Activated T-helper 1 cell treated with anti-CD3 and anti-CD28 coated beads, Interleukin-12 subunit alpha, Interleukin-12 subunit beta, Interleukin-2, Interleukin-4 antibody, amounts not matched to agents 30 ng/mL and 10 ng/mL and 1 ng/mL, durations not matched to agents 14 hours and 24 hours and 36 hours (primary cell): ENCODE measurements at regions of chr13 and their contacts with region 1.

Region 1: DNA sequence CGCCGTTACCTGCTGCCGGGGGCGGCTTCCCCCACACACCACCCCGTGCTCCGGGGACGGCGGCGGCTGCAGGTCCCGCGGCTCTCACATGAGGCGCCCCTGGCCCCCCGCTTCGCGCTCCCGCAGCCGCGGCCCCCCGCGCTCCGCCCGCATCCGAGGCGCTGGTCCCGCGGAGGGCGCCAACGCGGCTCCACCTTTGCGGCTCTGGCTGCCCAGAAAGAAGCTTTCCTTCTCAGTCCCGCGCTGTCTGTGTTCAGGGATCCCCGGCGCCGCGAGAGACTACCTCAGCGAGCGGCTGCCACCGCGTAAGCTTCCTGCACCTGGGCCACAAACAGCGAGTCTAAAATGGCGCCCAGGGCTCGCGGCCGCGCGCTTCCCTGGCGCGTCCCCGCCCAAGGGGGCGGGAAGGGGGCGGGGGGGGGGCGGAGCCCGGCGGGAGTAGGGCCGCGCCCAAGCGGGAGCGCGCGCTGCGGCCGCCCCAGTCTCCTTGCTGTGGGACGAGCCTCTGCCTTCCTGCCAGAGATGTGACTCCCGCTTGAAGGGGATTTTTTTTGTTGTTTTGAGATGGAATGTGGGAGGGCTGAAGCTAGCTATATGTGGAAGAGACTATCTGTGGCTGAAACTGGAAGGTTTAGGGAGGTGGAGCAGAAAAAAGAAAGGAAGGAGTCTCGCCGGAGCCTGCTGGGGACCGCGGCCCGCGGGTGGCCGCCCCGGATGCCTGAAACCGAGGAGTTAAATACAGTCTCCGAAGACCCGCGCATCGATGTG is at the start of gene FBXL3:
- DNase-seq: peak; percentile 78
- H3K4me3 Mint-ChIP-seq: peak within 1 kb of the TSS; percentile 94
- H3K27ac Mint-ChIP-seq: peak within 1 kb of the TSS; percentile 93
- H3K4me1 Mint-ChIP-seq: peaks cover 58% of the 10 kb centered on the region
- H3K27me3 Mint-ChIP-seq: no peaks in the 10 kb centered on the region
- total RNA-seq, gene FBXL3: 40.1 and 40.8 TPM in 2 replicates

Region 2: GRCh38 chr13:76861859-76862258 is 165.1 kb before region 1 on chr13:
- intact Hi-C with region 1: no loop called
- DNase-seq: no peak
- H3K4me3 Mint-ChIP-seq: no peak overlapping the region
- H3K27ac Mint-ChIP-seq: no peak overlapping the region
- H3K4me1 Mint-ChIP-seq: no peaks in the 10 kb centered on the region
- H3K27me3 Mint-ChIP-seq: peaks cover 18% of the 10 kb centered on the region

Region 3: GRCh38 chr13:76886292-76887075 is 140.5 kb before region 1 on chr13 and contains the start of gene KCTD12:
- intact Hi-C with region 1: loop called (anchors 1 kb)
- DNase-seq: peak; percentile 60
- H3K4me3 Mint-ChIP-seq: peak within 1 kb of the TSS; percentile 90
- H3K27ac Mint-ChIP-seq: peak within 1 kb of the TSS; percentile 85
- H3K4me1 Mint-ChIP-seq: peaks cover 28% of the 10 kb centered on the region
- H3K27me3 Mint-ChIP-seq: peaks cover 28% of the 10 kb centered on the region
- total RNA-seq, gene KCTD12: 10.4 and 10.7 TPM in 2 replicates

Region 4: DNA sequence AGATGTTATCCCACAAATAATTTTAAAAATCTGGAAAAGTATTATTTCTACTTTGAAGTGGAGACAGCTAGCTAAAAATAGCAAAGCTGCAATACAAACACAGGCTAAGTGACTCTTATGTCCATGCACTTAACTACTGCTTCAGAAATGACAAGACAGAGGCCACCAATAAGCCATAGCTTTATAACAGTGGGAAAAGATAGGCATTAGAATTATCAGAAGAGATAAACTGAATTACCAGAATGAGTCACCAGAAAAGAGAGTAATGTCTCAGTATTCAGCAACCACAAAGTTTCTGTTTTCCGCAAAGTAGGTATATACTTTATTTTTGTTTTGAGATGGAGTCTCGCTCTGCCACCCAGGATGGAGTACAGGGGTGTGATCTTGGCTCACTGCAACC is 18.0 kb before region 1 on chr13:
- intact Hi-C with region 1: loop called (anchors 1 kb)
- DNase-seq: no peak
- H3K4me3 Mint-ChIP-seq: no peak overlapping the region
- H3K27ac Mint-ChIP-seq: no peak overlapping the region
- H3K4me1 Mint-ChIP-seq: peaks cover 26% of the 10 kb centered on the region
- H3K27me3 Mint-ChIP-seq: no peaks in the 10 kb centered on the region

Region 5: DNA sequence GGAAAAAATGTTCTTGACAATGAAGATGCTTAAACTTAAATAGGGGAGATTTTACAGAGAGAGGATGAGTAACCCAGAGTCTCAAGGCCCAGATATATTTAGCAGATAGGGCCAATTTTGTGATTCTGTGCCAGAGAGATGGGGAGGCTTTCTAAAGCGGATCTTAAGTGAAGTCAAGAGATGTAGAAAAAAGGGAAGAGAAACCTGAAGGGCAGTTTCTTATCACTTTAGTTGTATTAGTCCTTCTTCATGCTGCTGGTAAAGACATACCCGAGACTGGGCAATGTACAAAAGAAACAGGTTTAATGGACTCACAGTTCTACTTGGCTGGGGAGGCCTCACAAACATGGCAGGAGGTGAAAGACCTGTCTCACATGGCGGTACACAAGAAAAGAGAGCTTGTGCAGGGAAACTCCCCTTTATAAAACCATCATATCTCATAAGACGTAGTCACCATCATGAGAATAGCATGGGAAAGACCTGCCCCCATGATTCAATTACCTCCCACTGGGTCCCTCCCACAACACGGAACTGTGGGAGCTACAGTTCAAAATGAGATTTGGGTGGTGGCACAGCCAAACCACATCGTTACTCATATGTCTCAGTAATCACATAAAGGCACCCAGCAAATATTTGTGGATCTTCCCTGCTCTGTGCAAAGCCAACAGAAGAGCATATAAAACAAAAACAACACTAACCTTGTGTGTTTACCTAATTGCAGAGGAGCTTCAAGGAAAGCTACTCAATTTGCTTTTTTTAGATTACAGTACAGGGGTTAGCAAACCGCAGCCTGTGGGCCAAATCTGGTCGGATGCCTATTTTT is 402.5 kb after region 1 on chr13:
- intact Hi-C with region 1: loop called (anchors 1 kb)
- DNase-seq: no peak
- H3K4me3 Mint-ChIP-seq: no peak overlapping the region
- H3K27ac Mint-ChIP-seq: peak overlapping the region; percentile 49
- H3K4me1 Mint-ChIP-seq: peaks cover 11% of the 10 kb centered on the region
- H3K27me3 Mint-ChIP-seq: no peaks in the 10 kb centered on the region